Dendritic cell treated with granulocyte-macrophage colony-stimulating factor and Interleukin-4, amounts not matched to agents 40 ng/mL and 50 ng/mL, for 4 days (primary cell): ENCODE measurements at regions of chr3 and their contacts with region 1.

Region 1: GRCh38 chr3:45593708-45594609 is 592 bp upstream of the LIMD1 start:
- H3K4me3 Mint-ChIP-seq: peak overlapping the region; percentile 81
- H3K27ac Mint-ChIP-seq: peak overlapping the region; percentile 85
- H3K4me1 Mint-ChIP-seq: peaks cover 59% of the 10 kb centered on the region
- H3K27me3 Mint-ChIP-seq: no peaks in the 10 kb centered on the region

Region 2: GRCh38 chr3:45516829-45517228 is 77.1 kb before region 1 on chr3:
- intact Hi-C with region 1: loop called (anchors 10 kb)
- H3K4me3 Mint-ChIP-seq: no peak overlapping the region
- H3K27ac Mint-ChIP-seq: peak overlapping the region; percentile 25
- H3K4me1 Mint-ChIP-seq: peaks cover 21% of the 10 kb centered on the region
- H3K27me3 Mint-ChIP-seq: no peaks in the 10 kb centered on the region

Region 3: DNA sequence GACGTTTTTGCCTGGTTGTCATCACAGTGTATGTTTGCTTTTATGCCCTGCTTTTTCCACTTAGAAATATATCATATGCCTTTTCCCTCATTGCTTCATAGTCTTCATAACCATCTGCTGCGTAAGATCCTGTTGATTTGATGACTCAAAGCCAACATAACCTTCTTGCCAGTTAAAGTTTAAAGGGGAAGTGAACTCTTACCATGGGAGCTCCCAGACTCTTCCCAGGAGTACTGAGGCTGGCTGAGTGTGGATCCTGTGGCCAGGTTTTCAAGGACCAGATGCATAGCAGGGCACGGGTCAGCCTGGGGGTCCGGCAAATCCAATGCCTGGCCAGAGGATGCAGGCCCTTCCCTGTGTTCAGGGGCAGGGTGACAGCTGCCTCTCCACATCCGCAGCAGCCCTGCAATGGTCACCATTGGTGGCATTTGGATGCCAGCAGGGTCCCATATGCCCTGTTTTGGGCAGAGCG is 53.2 kb after region 1 on chr3:
- intact Hi-C with region 1: loop called (anchors 5 kb)
- H3K4me3 Mint-ChIP-seq: no peak overlapping the region
- H3K27ac Mint-ChIP-seq: peak overlapping the region; percentile 78
- H3K4me1 Mint-ChIP-seq: peaks cover 69% of the 10 kb centered on the region
- H3K27me3 Mint-ChIP-seq: no peaks in the 10 kb centered on the region